ENCODE measurements at regions of chr5 and their contacts with region 1.

Region 1: GRCh38 chr5:76771705-76772405 is 47.0 kb upstream of the F2RL1 start:
- DNase-seq: peak in 1 of 4 experiments; percentile 19
- ATAC-seq: peak; percentile 52; the same call in 1 of the 3 replicates
- H3K4me3 ChIP-seq: no peak overlapping the region
- H3K27ac ChIP-seq: no peak overlapping the region
- H3K4me1 ChIP-seq: peaks cover 0 to 4% of the 10 kb centered on the region in 2 experiments; a peak in 2 of 5 replicates
- H3K27me3 ChIP-seq: no peaks in the 10 kb centered on the region
- CTCF ChIP-seq: no peak
- EP300 ChIP-seq: no peak
- POLR2A ChIP-seq: no peak
- RAD21 ChIP-seq: no peak

Region 2: DNA sequence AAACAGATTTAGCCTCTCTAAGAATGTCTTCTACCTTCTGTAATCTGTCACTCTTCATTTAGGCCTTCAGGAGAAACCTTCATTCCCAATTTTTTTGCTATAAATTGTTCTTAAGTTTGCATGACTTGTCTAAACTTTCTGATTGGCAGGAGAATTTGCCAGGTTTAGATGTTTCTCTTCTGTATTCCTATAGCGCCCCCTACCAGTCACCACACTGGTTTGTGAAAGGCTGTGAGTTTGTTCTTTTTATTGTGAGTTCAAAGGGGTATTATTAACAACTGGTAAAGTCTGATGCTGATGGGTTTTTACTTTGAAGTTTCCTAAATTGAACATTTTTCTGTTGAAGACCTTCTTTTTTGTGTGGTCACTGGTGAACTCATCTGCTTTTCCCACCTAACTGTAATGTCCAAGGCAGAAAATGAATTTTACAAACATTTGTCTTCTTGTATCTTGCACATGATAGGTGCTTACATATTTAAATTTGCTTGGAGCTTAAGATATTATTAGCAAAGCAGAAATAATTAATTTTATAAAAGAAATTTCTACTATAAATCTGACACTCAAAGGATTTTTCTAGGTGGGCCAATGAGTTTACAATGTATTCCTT is 130.2 kb before region 1 on chr5:
- CTCF ChIA-PET with region 1: no interaction called
- POLR2A ChIA-PET with region 1: no interaction called
- in situ Hi-C with region 1: loop called (anchors 10 kb)
- intact Hi-C with region 1: loop called (anchors 5 kb)
- DNase-seq: peak; percentile 61 to 81 (median 66)
- ATAC-seq: peak; percentile 88
- H3K4me3 ChIP-seq: no peak overlapping the region
- H3K27ac ChIP-seq: no peak overlapping the region
- H3K4me1 ChIP-seq: no peaks in the 10 kb centered on the region
- H3K27me3 ChIP-seq: no peaks in the 10 kb centered on the region
- CTCF ChIP-seq: peak; percentile 83 to 92 (median 83)
- EP300 ChIP-seq: no peak
- POLR2A ChIP-seq: no peak
- RAD21 ChIP-seq: peak; percentile 82 to 93

Region 3: DNA sequence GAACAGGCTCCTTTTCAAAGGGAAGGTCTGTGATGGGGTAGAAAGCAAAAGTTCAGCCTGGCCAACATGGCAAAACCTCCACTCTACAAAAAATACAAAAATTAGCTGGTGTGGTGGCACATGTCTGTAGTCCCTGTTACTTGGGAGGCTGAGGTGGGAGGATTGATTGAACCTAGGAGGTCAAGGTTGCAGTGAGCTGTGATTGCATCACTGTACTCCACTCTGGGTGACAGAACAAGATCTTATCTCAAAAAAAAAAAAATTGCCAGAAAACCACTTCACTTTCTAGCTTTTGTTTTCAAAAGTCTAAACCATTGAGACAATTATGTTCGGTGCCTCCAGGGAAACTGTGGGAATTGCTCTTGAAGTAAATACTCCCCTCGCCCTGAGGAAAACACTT is 121.4 kb after region 1 on chr5:
- CTCF ChIA-PET with region 1: no interaction called
- POLR2A ChIA-PET with region 1: no interaction called
- in situ Hi-C with region 1: no loop called
- intact Hi-C with region 1: no loop called
- DNase-seq: no peak
- ATAC-seq: no peak
- H3K4me3 ChIP-seq: no peak overlapping the region
- H3K27ac ChIP-seq: no peak overlapping the region
- H3K4me1 ChIP-seq: no peaks in the 10 kb centered on the region
- H3K27me3 ChIP-seq: peaks cover 0 to 9% of the 10 kb centered on the region in 2 experiments; a peak in 2 of 5 replicates
- CTCF ChIP-seq: no peak
- EP300 ChIP-seq: no peak
- POLR2A ChIP-seq: no peak
- RAD21 ChIP-seq: no peak

Measured in K562 (cell line).